Astrocyte of the cerebellum (primary cell): ENCODE measurements at regions of chr1 and their contacts with region 1.

Region 1: GRCh38 chr1:23422241-23423030 is 2.1 kb downstream of the TCEA3 start:
- DNase-seq: no peak
- H3K4me3 ChIP-seq: no peak overlapping the region
- CTCF ChIP-seq: no peak

Region 2: GRCh38 chr1:23496490-23497181 is 74.2 kb after region 1 on chr1:
- in situ Hi-C with region 1: loop called (anchors 5 kb)
- DNase-seq: no peak
- H3K4me3 ChIP-seq: no peak overlapping the region
- CTCF ChIP-seq: no peak